ENCODE measurements at regions of chr4 and their contacts with region 1.

Region 1: DNA sequence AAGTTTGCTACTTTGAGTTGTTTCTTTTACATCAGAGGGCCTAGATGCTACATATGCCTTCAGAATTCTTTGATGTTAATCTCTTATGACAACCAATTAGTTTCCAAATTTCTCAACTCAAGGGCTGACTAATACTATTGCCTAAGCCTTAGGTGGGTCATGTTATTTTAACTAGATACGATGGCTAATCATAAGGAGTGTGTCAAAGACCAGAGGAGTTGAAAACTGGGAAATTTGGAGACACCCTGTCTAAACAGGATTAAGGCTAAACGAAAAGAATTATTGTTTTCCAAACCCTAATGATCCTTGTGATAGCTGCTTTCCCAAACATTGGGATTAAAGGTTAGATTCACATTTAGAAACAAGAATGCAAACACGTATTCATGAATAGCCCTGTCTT is 228.5 kb downstream of the PCDH7 start:
- DNase-seq: no peak
- H3K4me3 Mint-ChIP-seq: no peak overlapping the region
- H3K27ac Mint-ChIP-seq: no peak overlapping the region
- H3K4me1 Mint-ChIP-seq: peaks cover 49% of the 10 kb centered on the region
- H3K27me3 Mint-ChIP-seq: no peaks in the 10 kb centered on the region
- CTCF ChIP-seq: no peak

Region 2: GRCh38 chr4:30903502-30904217 is 45.0 kb before region 1 on chr4:
- CTCF ChIA-PET with region 1: no interaction called
- intact Hi-C with region 1: loop called (anchors 5 kb)
- DNase-seq: no peak
- H3K4me3 Mint-ChIP-seq: no peak overlapping the region
- H3K27ac Mint-ChIP-seq: peak overlapping the region; percentile 81
- H3K4me1 Mint-ChIP-seq: peaks cover 20% of the 10 kb centered on the region
- H3K27me3 Mint-ChIP-seq: no peaks in the 10 kb centered on the region
- CTCF ChIP-seq: no peak

Region 3: DNA sequence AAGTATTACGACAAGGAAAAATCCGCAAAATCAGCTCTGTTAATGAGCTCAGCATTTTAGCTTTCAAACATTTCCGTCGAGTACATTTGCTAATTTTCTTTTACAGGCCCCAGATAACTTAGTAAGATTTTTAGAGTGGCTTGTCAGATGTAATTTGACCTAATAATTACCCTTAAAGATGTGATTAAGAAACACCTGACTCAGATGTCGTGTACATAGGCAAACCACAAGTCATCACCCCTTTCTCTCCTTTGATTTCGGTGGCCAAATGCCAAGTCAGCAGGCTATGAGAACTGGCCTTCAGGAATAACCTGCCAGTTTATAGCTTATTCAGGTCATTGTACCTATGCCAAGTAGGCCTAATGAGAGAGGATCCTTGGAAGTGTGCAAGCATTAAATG is 141.2 kb after region 1 on chr4:
- CTCF ChIA-PET with region 1: no interaction called
- intact Hi-C with region 1: loop called (anchors 10 kb)
- DNase-seq: peak; percentile 73
- H3K4me3 Mint-ChIP-seq: no peak overlapping the region
- H3K27ac Mint-ChIP-seq: peak overlapping the region; percentile 64
- H3K4me1 Mint-ChIP-seq: peaks cover 7% of the 10 kb centered on the region
- H3K27me3 Mint-ChIP-seq: peaks cover 44% of the 10 kb centered on the region
- CTCF ChIP-seq: no peak

Measured in Calu3 (cell line).